Mucosa of descending colon (tissue), 3 donors: ENCODE measurements at regions of chr14 and their contacts with region 1.

Region 1: DNA sequence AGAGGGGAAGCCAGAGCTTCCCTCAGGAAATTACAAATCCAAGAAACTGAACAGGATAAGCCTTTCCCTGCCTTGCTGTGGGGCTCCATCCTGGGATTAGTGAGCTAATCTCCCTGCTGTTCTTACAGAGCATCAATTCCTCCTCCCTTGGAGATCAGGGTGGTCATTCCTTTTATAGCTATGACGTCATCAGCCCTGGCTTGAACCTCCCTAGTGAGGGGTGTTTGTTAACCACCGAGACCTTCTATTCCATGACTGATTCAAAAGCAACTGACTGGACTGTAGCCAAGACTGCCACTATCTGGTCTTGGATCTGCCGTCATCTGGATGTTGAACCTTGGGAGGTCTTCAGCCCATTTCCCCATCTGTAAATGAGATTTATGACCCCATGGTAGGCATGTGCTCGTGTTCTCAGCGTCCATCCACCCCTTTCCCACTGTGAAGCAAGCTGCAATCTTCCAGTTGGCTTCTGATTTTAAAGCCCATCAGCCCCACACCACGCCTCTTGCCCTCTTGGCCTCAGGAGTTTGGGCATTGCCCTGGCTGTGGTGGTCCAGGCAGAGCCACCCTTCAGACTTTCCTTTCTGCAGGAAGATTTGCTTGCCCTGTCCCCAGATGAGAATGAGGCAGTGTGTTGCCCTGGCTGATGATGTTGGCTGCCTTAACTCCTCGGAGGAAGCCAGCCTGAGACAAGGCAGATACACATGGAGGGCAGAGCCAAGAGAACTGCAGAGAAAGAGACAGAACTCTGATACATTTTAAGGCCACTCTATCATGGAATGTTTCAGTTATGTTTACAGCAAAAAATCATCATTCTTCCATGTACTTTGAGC is 59.6 kb upstream of the ACTN1 start:
- DNase-seq: no peak
- ATAC-seq: no peak
- H3K4me3 ChIP-seq: no peak overlapping the region
- H3K4me1 ChIP-seq: peaks cover 15% of the 10 kb centered on the region
- CTCF ChIP-seq: no peak

Region 2: DNA sequence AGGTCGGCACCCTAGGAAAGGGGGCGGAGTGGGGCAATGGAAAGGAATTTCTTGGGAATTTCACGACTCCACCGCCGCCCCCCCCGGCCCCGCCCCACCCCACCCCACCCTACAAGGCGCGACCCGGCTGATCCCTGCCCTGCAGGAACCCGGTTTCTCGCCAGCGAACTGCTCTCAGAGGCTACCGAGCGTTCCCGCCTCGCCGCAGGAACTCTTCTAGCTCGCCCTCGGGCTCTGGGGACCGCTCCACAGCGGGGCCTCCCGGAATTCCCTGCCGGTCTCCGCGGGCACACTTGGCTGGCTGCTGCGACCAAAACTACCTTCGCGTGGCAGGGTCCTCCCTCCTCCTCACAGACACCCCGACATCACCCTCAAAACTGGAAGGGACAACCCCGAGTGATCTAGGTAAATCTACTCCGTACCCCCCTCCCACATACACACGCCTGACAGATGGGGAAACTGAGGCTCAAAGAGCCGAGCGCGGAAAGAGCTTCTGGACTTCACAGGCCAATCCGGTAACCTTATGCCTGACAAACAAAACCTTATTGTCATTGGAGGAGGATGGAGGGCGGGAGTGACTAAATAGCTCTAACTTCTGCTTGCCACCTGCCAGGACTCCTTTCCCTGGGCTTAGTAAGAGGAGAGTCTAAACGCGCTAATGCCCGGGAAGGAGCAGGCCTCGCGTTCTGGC is 58.7 kb before region 1 on chr14:
- intact Hi-C with region 1: loop called in 1 of 2 experiments (anchors 10 kb)
- DNase-seq: peak; percentile 58 to 75 (median 68)
- ATAC-seq: peak; percentile 37
- H3K4me3 ChIP-seq: peak overlapping the region; percentile 16
- H3K4me1 ChIP-seq: peaks cover 26% of the 10 kb centered on the region
- CTCF ChIP-seq: no peak